ENCODE measurements at regions of chr16 and their contacts with region 1.

Region 1: DNA sequence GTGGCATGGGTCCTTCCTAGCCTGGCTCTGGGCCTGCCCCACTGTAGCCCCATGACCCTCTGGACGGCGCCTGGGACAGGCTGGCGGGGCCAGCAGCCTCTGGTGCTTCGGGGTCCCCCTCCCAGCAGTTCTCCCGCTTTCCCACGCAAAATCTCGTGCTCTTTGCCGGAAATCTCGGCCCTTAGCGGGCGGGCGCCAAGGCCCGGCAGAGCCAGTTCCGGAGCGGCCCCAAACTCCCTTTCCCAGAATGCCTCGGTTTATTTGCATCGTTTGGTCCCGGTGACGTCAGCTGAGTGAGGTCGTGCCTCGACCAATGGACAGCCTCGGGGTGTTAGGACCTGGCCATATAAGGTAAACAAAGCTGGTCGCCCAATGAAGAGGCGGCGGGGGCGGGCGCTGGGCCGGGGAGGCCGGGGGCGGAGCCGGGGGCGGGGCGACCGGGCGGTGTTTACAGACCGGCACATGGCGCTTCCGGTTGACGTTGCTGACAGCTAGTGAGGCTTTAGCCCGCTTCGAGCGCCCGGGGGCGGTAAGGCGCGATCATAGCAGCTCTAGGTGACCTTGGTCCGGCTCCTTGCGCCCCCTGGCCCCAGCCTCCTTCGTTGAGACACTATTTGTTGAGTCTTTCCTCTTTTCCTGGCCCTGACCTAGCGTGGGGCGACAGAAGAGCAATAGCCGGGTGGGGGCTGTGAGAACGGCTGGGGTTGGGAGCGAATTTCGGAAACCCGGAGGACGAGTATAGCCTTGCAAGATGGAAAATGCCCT is 1.5 kb upstream of the UBALD1 start:
- DNase-seq: peak; percentile 100
- H3K4me3 Mint-ChIP-seq: peak overlapping the region; percentile 89
- H3K27ac Mint-ChIP-seq: peak overlapping the region; percentile 93
- H3K4me1 Mint-ChIP-seq: peaks cover 23% of the 10 kb centered on the region
- H3K27me3 Mint-ChIP-seq: no peaks in the 10 kb centered on the region

Region 2: DNA sequence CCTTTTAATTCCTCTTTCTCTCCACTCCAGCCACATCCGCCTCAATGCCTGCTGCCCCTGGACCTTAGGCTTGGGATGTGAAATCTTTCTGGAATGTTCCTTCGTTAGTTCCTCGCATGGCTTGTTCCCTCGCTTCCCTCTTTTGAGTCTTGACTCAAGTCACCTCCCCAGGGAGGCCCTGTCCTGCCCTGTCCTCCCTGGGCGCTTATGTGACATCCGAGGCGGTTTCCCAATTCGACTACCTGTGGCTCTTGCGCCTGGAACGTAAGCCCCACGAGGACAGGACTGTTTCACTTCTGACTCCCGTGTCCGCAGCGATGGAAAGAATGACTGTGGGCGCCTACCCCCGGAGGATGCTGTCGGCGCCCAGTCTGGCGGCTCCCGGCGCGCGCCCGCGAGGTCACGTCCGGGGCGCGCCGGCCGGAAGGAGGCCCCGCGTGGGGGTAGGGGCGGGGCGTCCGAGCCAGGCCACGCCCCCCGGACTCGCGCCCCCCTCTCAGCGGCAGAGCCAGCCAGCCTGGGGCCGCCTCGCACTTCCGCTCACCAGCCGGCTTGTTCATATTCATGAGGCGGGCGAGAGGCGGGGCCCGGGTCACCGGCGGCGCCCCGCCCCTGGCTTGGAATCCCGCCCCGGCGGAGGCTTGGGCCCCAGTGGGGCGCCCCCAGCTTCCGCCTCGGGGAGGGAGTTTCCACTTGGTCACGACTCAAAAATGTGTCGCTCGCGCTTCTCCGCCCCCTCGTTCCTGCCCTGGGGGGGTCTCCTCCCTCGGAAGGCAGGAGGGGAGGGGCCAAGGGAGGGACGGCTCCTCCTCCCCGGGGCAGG is 308.8 kb before region 1 on chr16:
- CTCF ChIA-PET with region 1: no interaction called
- intact Hi-C with region 1: loop called (anchors 1 kb)
- DNase-seq: peak; percentile 95
- H3K4me3 Mint-ChIP-seq: peak overlapping the region; percentile 84
- H3K27ac Mint-ChIP-seq: peak overlapping the region; percentile 85
- H3K4me1 Mint-ChIP-seq: peaks cover 24% of the 10 kb centered on the region
- H3K27me3 Mint-ChIP-seq: no peaks in the 10 kb centered on the region

Region 3: GRCh38 chr16:4425378-4426020 is 190.7 kb before region 1 on chr16 and contains the start of gene DNAJA3:
- CTCF ChIA-PET with region 1: no interaction called
- intact Hi-C with region 1: loop called (anchors 1 kb)
- DNase-seq: peak; percentile 93
- H3K4me3 Mint-ChIP-seq: peak within 1 kb of the TSS; percentile 99
- H3K27ac Mint-ChIP-seq: peak within 1 kb of the TSS; percentile 100
- H3K4me1 Mint-ChIP-seq: peaks cover 39% of the 10 kb centered on the region
- H3K27me3 Mint-ChIP-seq: no peaks in the 10 kb centered on the region
- total RNA-seq, gene DNAJA3: 86.7 to 88.0 TPM

Region 4: GRCh38 chr16:4660454-4661007 is 44.3 kb after region 1 on chr16:
- CTCF ChIA-PET with region 1: no interaction called
- intact Hi-C with region 1: loop called (anchors 2 kb)
- DNase-seq: peak; percentile 89
- H3K4me3 Mint-ChIP-seq: no peak overlapping the region
- H3K27ac Mint-ChIP-seq: peak overlapping the region; percentile 61
- H3K4me1 Mint-ChIP-seq: peaks cover 65% of the 10 kb centered on the region
- H3K27me3 Mint-ChIP-seq: no peaks in the 10 kb centered on the region

Region 5: DNA sequence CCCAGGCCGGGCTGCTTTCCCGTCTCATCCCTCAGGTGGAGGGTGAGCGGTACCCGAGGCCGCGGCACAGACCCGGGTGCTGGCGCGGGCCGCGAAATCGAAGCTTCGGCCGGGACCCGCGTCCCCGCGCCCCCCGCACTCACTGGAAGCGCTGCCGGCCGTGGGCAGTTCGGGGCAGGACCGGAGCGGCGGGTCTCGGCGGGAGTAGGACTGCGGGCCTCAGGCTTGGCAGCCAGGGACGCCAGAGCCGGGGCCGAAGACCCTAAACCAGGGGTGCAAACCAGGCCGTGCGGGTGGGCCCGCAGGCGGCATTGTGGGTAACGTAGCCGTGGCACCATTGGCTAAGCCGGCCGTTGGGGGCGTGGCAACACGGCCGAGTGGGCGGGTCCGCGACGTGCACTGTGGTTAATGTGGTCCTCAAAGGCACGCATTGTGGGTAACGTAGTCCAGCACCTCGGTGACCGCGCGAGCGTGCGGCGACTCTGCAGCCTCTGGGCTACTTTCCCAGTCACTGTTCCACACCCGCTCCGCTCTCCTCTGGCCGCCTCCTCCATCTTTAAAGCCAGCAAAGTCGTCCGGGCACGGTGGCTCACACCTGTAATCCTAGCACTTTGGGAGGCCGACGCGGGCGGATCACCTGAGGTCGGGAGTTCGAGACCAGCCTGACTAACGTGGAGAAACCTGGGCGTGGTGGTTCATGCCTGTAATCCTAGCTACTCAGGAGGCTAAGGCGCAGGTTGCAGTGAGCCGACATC is 150.8 kb after region 1 on chr16 and contains the start of gene ZNF500:
- CTCF ChIA-PET with region 1: no interaction called
- intact Hi-C with region 1: loop called (anchors 1 kb)
- DNase-seq: peak; percentile 98
- H3K4me3 Mint-ChIP-seq: peak within 1 kb of the TSS; percentile 93
- H3K27ac Mint-ChIP-seq: peak within 1 kb of the TSS; percentile 93
- H3K4me1 Mint-ChIP-seq: peaks cover 35% of the 10 kb centered on the region
- H3K27me3 Mint-ChIP-seq: no peaks in the 10 kb centered on the region
- total RNA-seq, gene ZNF500: 8.9 to 11.2 TPM

Measured in activated naive CD4-positive, alpha-beta T cell treated with anti-CD3 and anti-CD28 coated beads for 36 hours (primary cell).